Dendritic cell treated with granulocyte-macrophage colony-stimulating factor and Interleukin-4, amounts not matched to agents 40 ng/mL and 50 ng/mL, for 4 days (primary cell): ENCODE measurements at regions of chr3 and their contacts with region 1.

Region 1: DNA sequence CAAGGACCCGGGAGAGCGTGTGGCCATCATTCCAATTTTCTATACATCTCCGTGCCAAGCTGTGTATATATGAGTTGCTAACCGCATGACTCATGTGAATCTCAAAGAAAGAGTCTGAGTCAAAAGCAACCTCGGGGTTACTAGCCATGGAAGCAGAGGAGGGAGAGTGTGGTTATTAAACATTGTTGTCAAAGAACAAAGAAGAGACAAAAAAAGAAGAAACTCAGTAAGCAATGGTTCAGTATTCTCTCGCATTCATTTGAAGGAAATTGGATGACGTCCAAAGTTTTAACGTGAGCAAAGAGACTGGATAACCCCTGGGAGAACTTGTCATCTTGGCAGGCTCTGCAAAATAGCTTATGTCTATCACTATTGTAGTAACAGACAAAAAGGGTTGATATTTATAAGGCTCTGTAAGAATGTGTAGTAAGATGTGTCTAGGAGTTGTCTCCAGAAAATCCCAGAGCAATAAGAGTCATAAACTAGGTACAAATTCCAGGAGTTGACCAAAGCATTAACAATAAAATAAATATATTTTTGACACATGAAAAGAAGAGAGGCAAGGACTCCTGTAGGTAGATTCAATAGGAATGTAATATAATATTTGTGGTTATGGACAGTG is 52.8 kb upstream of the GRM7 start:
- H3K4me3 Mint-ChIP-seq: no peak overlapping the region
- H3K27ac Mint-ChIP-seq: no peak overlapping the region
- H3K4me1 Mint-ChIP-seq: no peaks in the 10 kb centered on the region
- H3K27me3 Mint-ChIP-seq: no peaks in the 10 kb centered on the region

Region 2: GRCh38 chr3:5226783-5227182 is 1581.3 kb before region 1 on chr3:
- intact Hi-C with region 1: loop called (anchors 10 kb)
- H3K4me3 Mint-ChIP-seq: no peak overlapping the region
- H3K27ac Mint-ChIP-seq: no peak overlapping the region
- H3K4me1 Mint-ChIP-seq: peaks cover 5% of the 10 kb centered on the region
- H3K27me3 Mint-ChIP-seq: no peaks in the 10 kb centered on the region

Region 3: GRCh38 chr3:6770397-6770690 is 37.7 kb before region 1 on chr3:
- intact Hi-C with region 1: no loop called
- H3K4me3 Mint-ChIP-seq: no peak overlapping the region
- H3K27ac Mint-ChIP-seq: no peak overlapping the region
- H3K4me1 Mint-ChIP-seq: no peaks in the 10 kb centered on the region
- H3K27me3 Mint-ChIP-seq: no peaks in the 10 kb centered on the region

Region 4: DNA sequence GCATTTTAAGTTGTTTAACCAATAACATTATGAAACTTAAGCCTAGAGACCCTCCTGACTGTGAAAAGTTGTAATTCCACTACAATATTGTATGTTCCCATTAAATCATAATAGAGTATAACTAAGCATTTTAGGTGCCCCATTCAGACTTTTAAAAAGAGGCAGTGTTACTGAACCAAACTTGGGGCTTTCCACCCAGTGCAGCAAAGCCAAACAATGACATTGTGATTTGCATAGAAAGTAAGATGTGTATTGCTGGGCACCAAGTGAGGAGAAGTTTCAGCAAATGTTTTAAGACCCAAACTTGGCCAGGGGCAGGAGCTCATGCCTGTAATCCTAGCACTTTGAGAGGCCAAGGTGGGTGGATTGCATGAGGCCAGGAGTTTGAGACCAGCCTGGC is 759.1 kb after region 1 on chr3:
- intact Hi-C with region 1: no loop called
- H3K4me3 Mint-ChIP-seq: no peak overlapping the region
- H3K27ac Mint-ChIP-seq: peak overlapping the region; percentile 41
- H3K4me1 Mint-ChIP-seq: peaks cover 11% of the 10 kb centered on the region
- H3K27me3 Mint-ChIP-seq: no peaks in the 10 kb centered on the region